HEK293T (cell line): ENCODE measurements at regions of chr16 and their contacts with region 1.

Region 1: DNA sequence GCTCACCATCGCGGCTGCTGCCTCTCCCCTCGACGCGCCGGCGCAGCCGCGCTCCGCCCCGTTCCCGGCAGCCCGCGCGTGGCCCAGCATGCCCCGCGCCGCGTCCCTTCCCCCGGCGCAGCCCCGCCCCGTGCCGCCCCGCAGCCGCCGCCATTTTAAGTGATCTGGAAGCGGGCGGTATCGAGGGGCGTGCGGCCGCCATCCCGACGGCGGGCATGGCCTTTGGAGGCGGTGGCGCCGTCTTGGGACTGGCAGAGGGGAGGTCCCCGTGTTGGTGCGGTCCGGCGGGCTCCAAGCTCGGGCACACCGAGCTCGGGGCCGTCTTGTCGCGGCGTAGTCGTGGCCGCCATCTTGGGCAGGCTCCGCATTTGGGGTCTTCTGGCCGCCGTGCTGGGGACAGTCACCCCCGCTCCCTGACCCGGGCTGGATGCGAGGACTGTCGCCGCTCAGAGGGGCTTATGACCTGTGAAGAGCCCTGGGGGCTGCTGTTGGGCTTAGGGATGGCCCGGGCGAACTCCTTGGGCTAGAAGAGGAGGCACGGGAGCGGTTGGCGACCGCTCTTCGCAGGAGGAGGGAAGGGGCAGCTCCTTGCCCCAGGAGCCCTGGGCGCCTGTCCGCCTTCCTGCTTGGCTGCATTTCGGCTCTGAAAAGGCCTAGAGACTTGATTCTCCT is at the start of gene ELOB:
- DNase-seq: peak; percentile 94

Region 2: DNA sequence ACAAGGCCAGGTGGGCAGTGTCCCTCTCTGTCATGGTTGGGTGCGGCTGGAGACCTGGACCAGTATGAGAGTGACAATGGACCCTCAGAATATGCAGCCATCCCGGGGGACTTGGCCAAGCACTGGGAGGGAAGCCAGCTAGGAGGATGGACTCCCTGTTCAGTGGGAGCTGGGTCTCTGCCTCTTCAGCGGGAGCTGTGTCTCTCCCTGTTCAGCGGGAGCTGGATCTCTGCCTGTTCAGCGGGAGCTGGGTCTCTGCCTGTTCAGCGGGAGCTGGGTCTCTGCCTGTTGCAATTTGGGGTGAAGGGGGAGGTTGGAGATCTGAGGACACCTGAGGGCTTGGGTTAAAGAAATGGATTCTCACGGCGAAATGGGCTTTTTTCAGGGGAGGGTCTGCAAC is 13.8 kb after region 1 on chr16:
- CTCF ChIA-PET with region 1: no interaction called
- POLR2A ChIA-PET with region 1: interaction called, 23 read pairs
- DNase-seq: no peak

Region 3: DNA sequence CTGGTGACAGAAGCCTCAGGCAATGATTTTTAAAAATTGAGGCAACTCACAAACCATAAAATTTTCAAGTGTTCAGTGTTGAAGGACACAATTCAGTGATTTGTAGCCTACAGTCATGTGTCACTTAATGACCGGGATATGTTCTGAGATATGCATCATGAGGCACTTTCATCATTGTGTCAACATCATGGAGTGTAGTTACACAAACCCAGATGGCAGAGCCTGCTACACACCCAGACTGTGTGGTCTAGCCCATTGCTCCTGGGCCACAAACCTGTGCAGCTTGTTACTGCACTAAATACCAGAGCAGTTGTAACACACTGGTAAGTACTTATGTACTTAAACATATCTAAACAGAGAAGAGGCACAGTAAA is 22.5 kb after region 1 on chr16:
- CTCF ChIA-PET with region 1: no interaction called
- POLR2A ChIA-PET with region 1: interaction called, 10 read pairs
- DNase-seq: no peak

Region 4: GRCh38 chr16:2821487-2822157 is 44.3 kb after region 1 on chr16:
- CTCF ChIA-PET with region 1: no interaction called
- POLR2A ChIA-PET with region 1: interaction called, 11 read pairs
- DNase-seq: no peak